WTC11 (cell line): ENCODE measurements at regions of chr6 and their contacts with region 1.

Region 1: GRCh38 chr6:1436334-1437306 is 47.2 kb downstream of the FOXF2 start:
- DNase-seq: peak; percentile 52
- ATAC-seq: peak; percentile 88
- H3K4me3 Mint-ChIP-seq: no peak overlapping the region
- H3K27ac Mint-ChIP-seq: no peak overlapping the region
- H3K4me1 Mint-ChIP-seq: peaks cover 20% of the 10 kb centered on the region
- H3K27me3 Mint-ChIP-seq: peaks cover 11% of the 10 kb centered on the region
- CTCF ChIP-seq: peak; percentile 65; the same call in 1 of the 2 replicates

Region 2: DNA sequence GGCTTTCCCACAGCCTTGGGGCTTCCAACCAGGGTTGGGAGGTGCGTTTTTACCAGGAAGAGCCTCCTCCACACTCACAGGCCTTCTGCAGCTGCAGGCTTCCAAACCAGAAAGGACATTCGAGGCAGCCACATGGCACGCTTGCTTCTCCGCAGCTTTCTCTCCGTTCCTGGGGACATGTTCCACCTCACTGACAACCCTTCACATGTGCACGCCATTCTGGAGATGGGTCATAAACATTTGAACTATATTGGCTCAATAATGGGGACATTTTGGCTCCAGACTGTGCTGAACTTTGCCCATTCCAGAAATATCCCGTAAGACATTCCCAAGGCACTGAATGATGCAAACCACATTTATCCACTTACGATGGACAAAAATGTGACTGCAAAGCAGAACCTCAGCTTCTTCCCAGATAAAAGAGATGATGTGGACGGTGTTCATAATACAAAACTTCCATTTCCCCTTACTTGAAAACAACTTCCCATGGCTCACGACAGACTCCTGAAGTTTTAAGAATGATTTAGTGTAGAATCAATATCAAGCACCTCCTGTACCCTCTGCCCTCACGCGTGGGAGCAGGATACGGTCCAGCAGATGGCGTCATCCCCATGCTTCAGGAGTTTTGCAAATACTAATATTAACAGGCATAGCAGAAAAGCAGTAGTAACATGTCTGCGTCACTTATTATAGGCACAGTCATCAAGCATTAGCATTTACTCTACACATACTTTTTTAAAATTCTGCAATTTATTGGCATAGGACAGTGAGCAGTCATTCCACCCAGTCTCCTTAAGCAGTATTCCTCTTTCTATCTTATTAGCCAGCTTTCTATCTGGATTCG is 72.7 kb before region 1 on chr6:
- CTCF ChIA-PET with region 1: interaction called, 15 read pairs
- POLR2A ChIA-PET with region 1: no interaction called
- DNase-seq: peak; percentile 36
- ATAC-seq: peak; percentile 65
- H3K4me3 Mint-ChIP-seq: no peak overlapping the region
- H3K27ac Mint-ChIP-seq: no peak overlapping the region
- H3K4me1 Mint-ChIP-seq: peaks cover 10% of the 10 kb centered on the region
- H3K27me3 Mint-ChIP-seq: peaks cover 10% of the 10 kb centered on the region
- CTCF ChIP-seq: no peak

Region 3: DNA sequence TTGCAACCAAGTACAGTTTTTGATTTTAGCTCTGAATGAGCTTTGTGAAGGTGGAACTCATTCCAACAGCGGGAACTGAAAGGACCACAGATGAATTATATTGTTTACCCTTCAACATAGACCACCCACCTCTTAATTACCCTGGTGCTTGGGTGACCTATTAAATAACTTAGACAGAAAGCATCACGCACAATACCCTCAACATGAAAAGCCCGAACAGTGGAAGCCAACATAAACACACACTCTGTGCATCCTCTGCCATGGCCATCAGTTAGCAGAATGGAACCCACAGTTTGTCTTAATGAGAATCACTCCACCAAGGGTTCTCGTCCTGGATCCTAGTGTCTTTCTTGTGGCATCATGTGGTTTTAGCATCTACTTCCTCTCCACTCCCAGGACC is 13.3 kb after region 1 on chr6:
- CTCF ChIA-PET with region 1: interaction called, 13 read pairs
- POLR2A ChIA-PET with region 1: no interaction called
- DNase-seq: no peak
- ATAC-seq: no peak
- H3K4me3 Mint-ChIP-seq: no peak overlapping the region
- H3K27ac Mint-ChIP-seq: no peak overlapping the region
- H3K4me1 Mint-ChIP-seq: peaks cover 10% of the 10 kb centered on the region
- H3K27me3 Mint-ChIP-seq: peaks cover 6% of the 10 kb centered on the region; the same call in 1 of the 2 replicates
- CTCF ChIP-seq: no peak